HCT116 (cell line): ENCODE measurements at regions of chr9 and their contacts with region 1.

Region 1: DNA sequence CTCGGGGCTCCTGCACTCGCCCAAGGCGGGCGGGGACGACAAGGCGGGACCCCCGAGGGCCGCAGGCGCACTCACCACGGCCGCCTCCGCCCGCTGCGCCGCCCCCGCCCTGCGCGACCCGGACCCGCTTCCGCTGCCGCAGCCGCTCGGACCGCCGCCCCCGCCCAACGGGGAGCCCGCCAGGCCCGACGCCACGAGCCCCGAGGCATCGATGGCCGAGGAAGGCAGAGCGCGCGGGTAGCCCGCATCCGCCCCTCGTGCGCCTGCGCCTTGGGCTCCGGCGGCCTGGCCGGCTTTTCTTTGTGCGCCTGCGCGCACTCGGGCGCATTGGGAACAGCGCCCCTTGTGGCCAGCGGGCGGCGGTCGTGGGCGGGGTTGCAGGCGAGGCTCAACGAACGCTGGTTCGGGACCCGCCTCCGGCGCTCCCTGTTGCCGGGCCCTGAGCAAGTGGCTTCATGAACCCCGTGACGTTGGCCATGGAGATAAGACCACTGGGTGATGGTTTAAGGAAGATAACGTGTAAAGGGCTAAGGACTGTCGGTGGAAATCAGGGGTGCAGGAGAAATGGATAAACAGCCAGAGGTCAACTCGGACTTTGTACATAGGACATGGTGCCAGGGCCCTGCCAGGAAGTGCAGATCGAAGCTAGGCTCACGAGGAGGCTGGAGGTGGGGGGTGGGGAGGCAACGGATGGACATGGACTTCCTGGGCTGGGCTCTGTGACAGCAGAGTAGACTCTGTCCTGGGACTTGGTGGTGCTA is at the starts of genes C8G and FBXW5:
- DNase-seq: peak; percentile 80
- ATAC-seq: peak; percentile 75
- H3K4me3 ChIP-seq: peak within 1 kb of the TSS; percentile 78 to 88
- H3K27ac ChIP-seq: peak within 1 kb of the TSS; percentile 97
- H3K4me1 ChIP-seq: peaks cover 21 to 43% of the 10 kb centered on the region in 2 experiments
- H3K27me3 ChIP-seq: no peaks in the 10 kb centered on the region
- CTCF ChIP-seq: peak in 2 of 3 experiments; percentile 86 to 95; a peak in 4 of 6 replicates
- POLR2A ChIP-seq: peak; percentile 31
- RAD21 ChIP-seq: no peak
- total RNA-seq, gene C8G: 2.1 TPM
- total RNA-seq, gene FBXW5: 88.0 TPM

Region 2: GRCh38 chr9:136790927-136791641 is 153.6 kb before region 1 on chr9 and contains the start of gene TMEM141:
- CTCF ChIA-PET with region 1: interaction called, 4 read pairs
- POLR2A ChIA-PET with region 1: no interaction called
- RAD21 ChIA-PET with region 1: no interaction called
- intact Hi-C with region 1: loop called (anchors 5 kb)
- DNase-seq: peak; percentile 98
- ATAC-seq: peak; percentile 88
- H3K4me3 ChIP-seq: peak within 1 kb of the TSS; percentile 83 to 84
- H3K27ac ChIP-seq: peak within 1 kb of the TSS; percentile 79
- H3K4me1 ChIP-seq: peaks cover 14 to 40% of the 10 kb centered on the region in 2 experiments; a peak in 3 of 4 replicates
- H3K27me3 ChIP-seq: no peaks in the 10 kb centered on the region
- CTCF ChIP-seq: no peak
- POLR2A ChIP-seq: peak; percentile 46
- RAD21 ChIP-seq: no peak
- total RNA-seq, gene TMEM141: 73.6 TPM

Region 3: GRCh38 chr9:137286975-137287383 is 342.3 kb after region 1 on chr9:
- CTCF ChIA-PET with region 1: no interaction called
- POLR2A ChIA-PET with region 1: no interaction called
- RAD21 ChIA-PET with region 1: no interaction called
- intact Hi-C with region 1: no loop called
- DNase-seq: peak; percentile 72
- ATAC-seq: peak; percentile 99
- H3K4me3 ChIP-seq: no peak overlapping the region
- H3K27ac ChIP-seq: no peak overlapping the region
- H3K4me1 ChIP-seq: peaks cover 3 to 8% of the 10 kb centered on the region in 2 experiments; a peak in 2 of 4 replicates
- H3K27me3 ChIP-seq: no peaks in the 10 kb centered on the region
- CTCF ChIP-seq: peak; percentile 68 to 84 (median 69)
- POLR2A ChIP-seq: no peak
- RAD21 ChIP-seq: peak; percentile 87